ENCODE measurements at regions of chr7 and their contacts with region 1.

Region 1: GRCh38 chr7:138161600-138162081 is 85.4 kb downstream of the AKR1D1 start:
- DNase-seq: peak; percentile 77
- H3K4me3 ChIP-seq: no peak overlapping the region
- H3K27ac ChIP-seq: no peak overlapping the region
- H3K4me1 ChIP-seq: no peaks in the 10 kb centered on the region
- H3K27me3 ChIP-seq: no peaks in the 10 kb centered on the region
- CTCF ChIP-seq: peak; percentile 55 to 87

Region 2: GRCh38 chr7:138407792-138408191 is 246.2 kb after region 1 on chr7:
- CTCF ChIA-PET with region 1: no interaction called
- dilution Hi-C with region 1: no loop called
- in situ Hi-C with region 1: no loop called
- intact Hi-C with region 1: no loop called
- DNase-seq: no peak
- H3K4me3 ChIP-seq: no peak overlapping the region
- H3K27ac ChIP-seq: no peak overlapping the region
- H3K4me1 ChIP-seq: no peaks in the 10 kb centered on the region
- H3K27me3 ChIP-seq: no peaks in the 10 kb centered on the region
- CTCF ChIP-seq: no peak

Region 3: DNA sequence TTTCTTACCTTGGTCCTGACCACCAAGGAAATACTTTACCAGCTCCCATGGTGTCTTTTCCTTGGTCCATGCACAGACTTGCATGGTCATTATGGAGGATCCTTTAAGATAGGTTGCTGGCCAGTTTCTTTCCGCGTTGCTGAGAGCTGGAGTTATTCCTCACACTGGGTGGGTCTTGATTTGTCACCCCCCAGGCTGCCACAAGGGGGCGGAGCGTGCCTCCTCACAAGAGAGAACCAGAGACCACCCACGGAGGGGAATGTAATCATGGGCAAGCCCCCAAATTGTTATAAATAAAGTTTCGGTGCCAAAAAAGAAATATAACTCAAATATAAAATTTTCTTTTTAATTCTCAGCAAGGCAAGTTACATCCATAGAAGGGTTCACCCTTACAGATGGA is 287.9 kb after region 1 on chr7:
- CTCF ChIA-PET with region 1: no interaction called
- dilution Hi-C with region 1: no loop called
- in situ Hi-C with region 1: no loop called
- intact Hi-C with region 1: loop called (anchors 5 kb)
- DNase-seq: no peak
- H3K4me3 ChIP-seq: no peak overlapping the region
- H3K27ac ChIP-seq: no peak overlapping the region
- H3K4me1 ChIP-seq: no peaks in the 10 kb centered on the region
- H3K27me3 ChIP-seq: no peaks in the 10 kb centered on the region
- CTCF ChIP-seq: peak in 1 of 2 donors; percentile 8

Region 4: GRCh38 chr7:138459413-138460175 is 298.0 kb after region 1 on chr7:
- CTCF ChIA-PET with region 1: no interaction called
- dilution Hi-C with region 1: no loop called
- in situ Hi-C with region 1: no loop called
- intact Hi-C with region 1: loop called (anchors 5 kb)
- DNase-seq: peak; percentile 97
- H3K4me3 ChIP-seq: peak overlapping the region; percentile 42 to 51 (median 50)
- H3K27ac ChIP-seq: no peak overlapping the region
- H3K4me1 ChIP-seq: peaks cover 7% of the 10 kb centered on the region
- H3K27me3 ChIP-seq: no peaks in the 10 kb centered on the region
- CTCF ChIP-seq: no peak

Region 5: DNA sequence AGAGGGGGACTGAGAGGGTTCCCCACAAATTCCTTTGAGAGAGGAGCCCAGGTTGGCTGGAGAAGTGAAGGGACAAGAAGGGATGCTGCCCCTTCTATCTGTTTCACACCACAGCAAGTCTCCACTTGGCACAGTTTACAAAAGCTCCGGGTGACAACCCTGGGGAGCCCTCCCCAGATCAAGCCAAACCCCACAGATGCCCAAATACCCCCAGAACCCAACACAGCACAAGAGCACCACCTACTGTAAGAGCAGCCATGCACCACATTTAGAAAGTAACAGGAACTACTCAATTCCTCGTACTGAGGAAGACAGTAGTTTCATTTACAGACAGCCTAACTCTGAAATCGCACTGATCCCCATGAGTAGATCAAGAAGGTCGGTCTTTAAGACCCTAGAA is 704.2 kb after region 1 on chr7:
- CTCF ChIA-PET with region 1: no interaction called
- dilution Hi-C with region 1: no loop called
- in situ Hi-C with region 1: no loop called
- intact Hi-C with region 1: loop called (anchors 2 kb)
- DNase-seq: no peak
- H3K4me3 ChIP-seq: no peak overlapping the region
- H3K27ac ChIP-seq: no peak overlapping the region
- H3K4me1 ChIP-seq: peaks cover 7% of the 10 kb centered on the region
- H3K27me3 ChIP-seq: no peaks in the 10 kb centered on the region
- CTCF ChIP-seq: peak; percentile 37 to 69

Measured in mammary epithelial cell (primary cell).